CD4-positive, alpha-beta memory T cell (primary cell): ENCODE measurements at regions of chr2 and their contacts with region 1.

Region 1: DNA sequence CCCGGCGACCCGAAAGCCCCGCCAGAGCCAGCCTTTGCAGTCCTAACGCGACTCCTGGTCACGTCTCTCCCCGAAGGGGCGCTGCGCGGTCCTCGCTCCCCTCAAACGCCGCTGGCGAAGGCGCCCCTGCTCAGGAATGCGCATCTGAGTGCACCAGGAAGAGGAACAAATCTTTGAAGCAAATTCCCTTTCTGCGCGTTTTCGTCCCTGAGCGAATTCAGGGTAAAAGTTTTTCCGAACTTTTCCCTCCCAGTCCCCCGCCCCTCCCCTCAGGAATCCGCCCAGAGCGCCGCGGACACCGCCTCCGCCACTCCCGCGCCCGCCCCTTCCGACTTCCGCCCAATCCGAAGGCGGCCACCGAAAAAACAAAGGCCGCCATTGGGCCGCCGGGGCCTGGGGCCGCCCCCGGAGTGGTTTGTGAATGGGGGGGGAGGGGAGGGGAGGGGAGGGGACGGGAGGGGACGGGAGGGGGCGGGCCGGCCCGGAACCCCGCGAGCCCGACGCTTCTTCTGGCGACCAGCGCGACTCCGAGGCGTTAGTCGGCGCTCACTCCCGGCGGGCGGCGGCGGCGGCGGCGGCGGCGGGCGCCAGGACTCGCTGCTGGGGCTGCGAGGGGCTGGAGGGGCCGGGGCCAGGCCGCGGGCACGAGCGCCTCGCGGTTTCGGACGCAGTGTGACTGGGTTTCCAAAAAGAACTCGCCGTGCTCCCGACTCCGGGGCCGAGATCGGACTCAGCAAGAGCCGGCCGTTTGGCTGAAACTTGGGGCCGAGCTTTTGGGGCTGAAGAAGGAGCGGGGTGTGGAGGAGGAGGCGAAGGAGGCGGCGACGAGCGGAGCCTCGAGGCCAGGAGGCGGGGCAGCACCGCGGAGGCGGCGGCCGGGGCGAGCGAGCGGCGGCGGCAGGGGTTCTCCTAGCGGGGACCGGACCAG is at the start of gene FZD7:
- DNase-seq: peak; percentile 80 to 86 (median 82)
- H3K4me3 ChIP-seq: peak within 1 kb of the TSS; percentile 67 to 91
- H3K4me3 Mint-ChIP-seq: peak within 1 kb of the TSS; percentile 91 to 96 (median 93)
- H3K27ac ChIP-seq: peak within 1 kb of the TSS; percentile 15
- H3K27ac Mint-ChIP-seq: peak within 1 kb of the TSS; percentile 79 to 91 (median 84)
- H3K4me1 ChIP-seq: peaks cover 21% of the 10 kb centered on the region
- H3K4me1 Mint-ChIP-seq: peaks cover 8 to 15% (median 10%) of the 10 kb centered on the region in 4 donors
- H3K27me3 ChIP-seq: peaks cover 27% of the 10 kb centered on the region
- H3K27me3 Mint-ChIP-seq: peaks cover 6 to 7% of the 10 kb centered on the region in 2 donors
- total RNA-seq, gene FZD7: 0.47 to 0.61 TPM

Region 2: GRCh38 chr2:201451292-201452057 is 582.1 kb before region 1 on chr2 and contains the starts of genes STRADB and TRAK2:
- CTCF ChIA-PET with region 1: no interaction called
- POLR2A ChIA-PET with region 1: no interaction called
- intact Hi-C with region 1: loop called (anchors 1 kb)
- DNase-seq: peak; percentile 93 to 98 (median 95)
- H3K4me3 ChIP-seq: peak within 1 kb of the TSS; percentile 38 to 93
- H3K4me3 Mint-ChIP-seq: peak within 1 kb of the TSS; percentile 94 to 99 (median 98)
- H3K27ac ChIP-seq: peak within 1 kb of the TSS; percentile 74
- H3K27ac Mint-ChIP-seq: peak within 1 kb of the TSS; percentile 95 to 98 (median 97)
- H3K4me1 ChIP-seq: peaks cover 49% of the 10 kb centered on the region
- H3K4me1 Mint-ChIP-seq: peaks cover 29 to 52% (median 41%) of the 10 kb centered on the region in 4 donors
- H3K27me3 ChIP-seq: no peaks in the 10 kb centered on the region
- H3K27me3 Mint-ChIP-seq: no peaks in the 10 kb centered on the region
- total RNA-seq, gene STRADB: 17.3 to 20.9 TPM
- total RNA-seq, gene TRAK2: 46.8 to 47.3 TPM

Region 3: GRCh38 chr2:201780674-201781581 is 252.7 kb before region 1 on chr2 and contains the start of gene ALS2:
- CTCF ChIA-PET with region 1: no interaction called
- POLR2A ChIA-PET with region 1: no interaction called
- intact Hi-C with region 1: loop called (anchors 5 kb)
- DNase-seq: peak; percentile 94 to 97 (median 96)
- H3K4me3 ChIP-seq: peak within 1 kb of the TSS; percentile 89 to 95
- H3K4me3 Mint-ChIP-seq: peak within 1 kb of the TSS; percentile 93 to 99 (median 97)
- H3K27ac ChIP-seq: peak within 1 kb of the TSS; percentile 76
- H3K27ac Mint-ChIP-seq: peak within 1 kb of the TSS; percentile 85 to 100 (median 99)
- H3K4me1 ChIP-seq: peaks cover 15% of the 10 kb centered on the region
- H3K4me1 Mint-ChIP-seq: peaks cover 11 to 22% (median 15%) of the 10 kb centered on the region in 4 donors
- H3K27me3 ChIP-seq: no peaks in the 10 kb centered on the region
- H3K27me3 Mint-ChIP-seq: peaks cover 1 to 4% of the 10 kb centered on the region in 2 donors
- total RNA-seq, gene ALS2: 9.8 to 10.5 TPM

Region 4: GRCh38 chr2:202104278-202104870 is 70.8 kb after region 1 on chr2:
- CTCF ChIA-PET with region 1: no interaction called
- POLR2A ChIA-PET with region 1: no interaction called
- intact Hi-C with region 1: no loop called
- DNase-seq: no peak
- H3K4me3 ChIP-seq: no peak overlapping the region
- H3K4me3 Mint-ChIP-seq: no peak overlapping the region
- H3K27ac ChIP-seq: no peak overlapping the region
- H3K27ac Mint-ChIP-seq: no peak overlapping the region
- H3K4me1 ChIP-seq: no peaks in the 10 kb centered on the region
- H3K4me1 Mint-ChIP-seq: no peaks in the 10 kb centered on the region
- H3K27me3 ChIP-seq: no peaks in the 10 kb centered on the region
- H3K27me3 Mint-ChIP-seq: peaks cover 5 to 16% of the 10 kb centered on the region in 2 donors

Region 5: DNA sequence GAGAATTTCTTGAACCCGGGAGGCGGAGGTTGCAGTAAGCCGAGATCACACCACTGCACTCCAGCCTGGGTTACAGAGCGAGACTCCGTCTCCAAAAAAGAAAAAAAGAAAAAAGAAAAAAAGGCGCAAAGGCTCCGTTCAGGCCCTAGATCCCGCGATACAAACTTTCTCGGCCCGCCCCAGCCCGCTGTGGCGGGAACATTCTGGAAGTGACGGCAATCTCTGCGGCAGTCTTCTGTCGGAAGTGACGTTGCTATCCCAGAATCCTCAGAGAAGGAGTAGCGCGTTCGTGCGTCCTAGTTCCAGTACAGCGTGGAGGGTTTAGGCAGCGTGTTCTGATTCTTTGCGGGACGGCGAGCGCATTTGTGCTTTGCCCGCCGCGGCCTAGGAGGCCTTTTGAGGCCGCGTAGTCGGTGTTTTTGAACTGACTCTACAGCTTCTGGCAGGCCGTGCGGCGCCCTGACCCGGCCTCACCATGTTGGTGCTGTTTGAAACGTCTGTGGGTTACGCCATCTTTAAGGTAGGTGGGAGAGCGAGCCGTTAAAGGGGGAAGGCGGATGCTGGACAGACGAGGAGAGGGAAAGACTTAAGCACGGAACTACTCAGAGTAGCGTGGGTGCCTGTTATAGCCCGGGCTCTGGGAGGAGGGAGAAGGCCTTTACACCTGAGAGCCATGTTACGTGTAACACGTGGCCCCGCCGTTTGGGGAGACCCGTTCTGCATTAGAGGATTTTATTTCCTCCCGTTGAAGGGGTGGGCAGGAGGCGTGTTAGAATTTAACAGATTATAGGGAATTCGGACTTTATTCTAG is 232.1 kb after region 1 on chr2 and contains the start of gene NOP58:
- CTCF ChIA-PET with region 1: no interaction called
- POLR2A ChIA-PET with region 1: no interaction called
- intact Hi-C with region 1: loop called (anchors 10 kb)
- DNase-seq: peak; percentile 91 to 96 (median 94)
- H3K4me3 ChIP-seq: peak within 1 kb of the TSS; percentile 92 to 97
- H3K4me3 Mint-ChIP-seq: peak within 1 kb of the TSS in 6 of 8 donors; percentile 55 to 79 (median 67)
- H3K27ac ChIP-seq: peak within 1 kb of the TSS; percentile 99
- H3K27ac Mint-ChIP-seq: peak within 1 kb of the TSS in 5 of 7 donors; percentile 48 to 91 (median 72)
- H3K4me1 ChIP-seq: peaks cover 39% of the 10 kb centered on the region
- H3K4me1 Mint-ChIP-seq: peaks cover 9 to 35% (median 16%) of the 10 kb centered on the region in 4 donors
- H3K27me3 ChIP-seq: no peaks in the 10 kb centered on the region
- H3K27me3 Mint-ChIP-seq: no peaks in the 10 kb centered on the region
- total RNA-seq, gene NOP58: 114 to 123 TPM